Naive thymus-derived CD4-positive, alpha-beta T cell (primary cell): ENCODE measurements at regions of chr3 and their contacts with region 1.

Region 1: DNA sequence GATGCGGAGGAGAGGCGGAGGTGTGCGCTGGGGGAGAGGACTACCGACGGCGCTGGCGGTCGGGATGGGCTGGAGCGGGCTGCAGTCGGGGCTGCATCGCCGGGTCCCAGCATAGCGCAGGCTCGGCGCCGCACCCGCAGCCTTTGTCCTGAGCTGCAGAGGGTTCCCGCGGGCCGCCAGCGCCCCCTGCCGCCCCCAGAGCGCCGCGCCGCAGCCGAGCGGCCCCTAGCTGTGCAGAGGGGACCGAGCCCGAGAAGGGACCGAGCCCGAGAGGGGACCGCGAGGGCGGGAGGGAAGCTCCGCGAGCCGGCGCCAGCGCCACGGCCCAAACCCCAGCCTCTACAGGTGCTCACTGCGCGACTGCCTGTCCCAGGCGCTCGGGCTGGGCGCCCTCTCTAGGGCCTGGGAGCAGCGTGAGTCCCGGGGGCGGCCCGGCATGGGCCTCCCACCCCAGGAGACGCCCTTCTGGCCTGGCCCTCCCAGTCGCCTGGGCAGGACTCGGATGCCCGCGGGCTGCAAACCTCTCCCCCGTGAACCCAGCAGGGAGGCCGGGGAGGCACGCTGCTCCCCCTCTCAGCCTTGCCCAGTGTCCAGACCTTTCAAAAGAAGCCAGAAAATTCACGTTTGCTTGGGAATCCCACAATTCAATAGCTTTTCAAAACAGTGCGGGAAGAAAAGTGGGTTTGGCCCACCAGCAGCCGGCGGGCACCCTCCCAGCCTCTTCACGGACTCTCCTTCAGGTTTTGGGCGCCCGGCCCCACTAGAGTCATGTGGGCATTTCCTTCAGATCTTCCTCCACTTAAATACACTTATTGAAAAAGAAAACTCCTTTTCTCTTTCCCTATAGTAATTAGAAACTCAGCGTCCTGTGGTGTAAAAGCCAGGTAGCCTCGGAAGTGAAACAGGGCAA is 134.7 kb downstream of the TPRA1 start:
- DNase-seq: peak in 8 of 9 donors; percentile 14 to 70 (median 41)
- ATAC-seq: peak; percentile 75
- H3K4me3 ChIP-seq: no peak overlapping the region
- H3K4me3 Mint-ChIP-seq: peak overlapping the region in 9 of 10 donors; percentile 5 to 77 (median 53)
- H3K27ac ChIP-seq: no peak overlapping the region
- H3K27ac Mint-ChIP-seq: no peak overlapping the region
- H3K4me1 ChIP-seq: no peaks in the 10 kb centered on the region
- H3K4me1 Mint-ChIP-seq: peaks cover 4 to 18% (median 14%) of the 10 kb centered on the region in 7 donors
- H3K27me3 ChIP-seq: peaks cover 0 to 8% of the 10 kb centered on the region in 2 donors
- H3K27me3 Mint-ChIP-seq: peaks cover 47 to 72% (median 65%) of the 10 kb centered on the region in 5 donors

Region 2: DNA sequence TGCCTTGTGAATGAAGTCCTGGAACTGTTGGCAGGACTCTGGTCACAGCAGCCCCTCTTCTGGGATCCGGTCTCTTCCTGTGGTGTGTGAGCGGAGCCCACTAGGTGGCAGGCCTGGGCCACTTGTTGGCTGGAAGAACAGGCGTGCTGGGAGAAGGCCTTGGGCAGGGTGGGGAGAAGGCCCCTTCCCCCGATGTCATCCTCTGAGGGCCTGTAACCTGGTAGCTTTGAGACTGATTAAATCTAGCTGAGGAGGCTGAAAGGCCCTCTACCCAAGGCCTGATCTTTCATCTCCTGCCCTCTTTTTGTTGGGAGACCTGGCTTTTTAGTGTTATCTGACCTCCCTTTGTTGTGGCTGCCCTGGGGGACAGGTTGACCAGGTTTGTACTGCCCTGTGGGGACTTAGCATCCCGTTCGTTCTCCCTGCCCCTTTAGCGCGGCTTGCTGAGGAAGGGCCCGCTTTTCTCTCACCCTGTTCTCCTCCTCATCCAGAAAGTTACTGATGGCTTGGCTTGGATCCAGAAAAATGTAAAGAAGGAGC is 703.4 kb before region 1 on chr3:
- CTCF ChIA-PET with region 1: no interaction called
- POLR2A ChIA-PET with region 1: no interaction called
- intact Hi-C with region 1: loop called in 1 of 2 experiments (anchors 1 kb)
- DNase-seq: peak in 7 of 9 donors; percentile 11 to 54 (median 21)
- ATAC-seq: peak; percentile 73
- H3K4me3 ChIP-seq: no peak overlapping the region
- H3K4me3 Mint-ChIP-seq: no peak overlapping the region
- H3K27ac ChIP-seq: no peak overlapping the region
- H3K27ac Mint-ChIP-seq: peak overlapping the region in 1 of 9 donors; percentile 53
- H3K4me1 ChIP-seq: no peaks in the 10 kb centered on the region
- H3K4me1 Mint-ChIP-seq: peaks cover 0 to 12% (median 10%) of the 10 kb centered on the region in 7 donors
- H3K27me3 ChIP-seq: no peaks in the 10 kb centered on the region
- H3K27me3 Mint-ChIP-seq: no peaks in the 10 kb centered on the region

Region 3: GRCh38 chr3:127445581-127446343 is 10.0 kb before region 1 on chr3:
- CTCF ChIA-PET with region 1: no interaction called
- POLR2A ChIA-PET with region 1: no interaction called
- intact Hi-C with region 1: no loop called
- DNase-seq: no peak
- ATAC-seq: no peak
- H3K4me3 ChIP-seq: no peak overlapping the region
- H3K4me3 Mint-ChIP-seq: no peak overlapping the region
- H3K27ac ChIP-seq: no peak overlapping the region
- H3K27ac Mint-ChIP-seq: no peak overlapping the region
- H3K4me1 ChIP-seq: no peaks in the 10 kb centered on the region
- H3K4me1 Mint-ChIP-seq: no peaks in the 10 kb centered on the region
- H3K27me3 ChIP-seq: no peaks in the 10 kb centered on the region
- H3K27me3 Mint-ChIP-seq: peaks cover 2 to 58% (median 27%) of the 10 kb centered on the region in 5 donors